ENCODE measurements at regions of chr7 and their contacts with region 1.

Region 1: GRCh38 chr7:85023045-85023712 is 163.7 kb downstream of the SEMA3D start:
- DNase-seq: peak in 1 of 2 donors; percentile 46
- ATAC-seq: peak in 1 of 8 donors; percentile 43
- H3K4me3 ChIP-seq: no peak overlapping the region
- H3K27ac ChIP-seq: no peak overlapping the region
- H3K4me1 ChIP-seq: peaks cover 0 to 9% (median 0%) of the 10 kb centered on the region in 9 donors
- H3K27me3 ChIP-seq: no peaks in the 10 kb centered on the region
- CTCF ChIP-seq: peak; percentile 55 to 87 (median 69)

Region 2: DNA sequence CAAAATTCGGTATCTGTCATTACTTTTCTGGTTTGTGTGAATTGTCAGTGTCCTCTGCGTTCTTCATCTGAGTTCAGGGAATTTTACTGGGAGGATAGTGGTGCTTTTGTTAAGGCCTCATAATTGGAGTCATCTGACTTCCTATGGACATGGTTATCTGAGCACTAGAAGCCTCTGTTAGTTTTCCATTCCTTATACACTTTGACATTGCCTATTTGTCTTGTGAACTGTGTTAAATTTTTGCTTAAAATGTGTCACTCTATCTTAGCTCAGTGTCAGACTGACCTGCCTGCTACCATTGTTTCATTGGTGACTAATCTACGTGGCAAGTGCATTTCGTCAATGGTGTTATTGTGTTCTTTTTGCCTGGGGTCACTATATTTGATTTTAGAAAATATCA is 1081.9 kb before region 1 on chr7:
- intact Hi-C with region 1: loop called in 9 of 10 experiments (anchors 1 to 10 kb)
- DNase-seq: no peak
- ATAC-seq: no peak
- H3K4me3 ChIP-seq: no peak overlapping the region
- H3K27ac ChIP-seq: no peak overlapping the region
- H3K4me1 ChIP-seq: peaks cover 0 to 4% (median under 1%) of the 10 kb centered on the region in 9 donors
- H3K27me3 ChIP-seq: no peaks in the 10 kb centered on the region
- CTCF ChIP-seq: no peak

Region 3: GRCh38 chr7:84194543-84195271 is 828.5 kb before region 1 on chr7 and contains the start of gene SEMA3A:
- intact Hi-C with region 1: loop called in 3 of 10 experiments (anchors 5 to 10 kb)
- DNase-seq: peak in 1 of 2 donors; percentile 16
- ATAC-seq: peak; percentile 73 to 85 (median 78)
- H3K4me3 ChIP-seq: peak within 1 kb of the TSS in 9 of 10 donors; percentile 29 to 57 (median 48)
- H3K27ac ChIP-seq: peak within 1 kb of the TSS in 1 of 10 donors; percentile 35
- H3K4me1 ChIP-seq: peaks cover 0 to 13% (median 0%) of the 10 kb centered on the region in 9 donors
- H3K27me3 ChIP-seq: no peaks in the 10 kb centered on the region
- CTCF ChIP-seq: no peak
- total RNA-seq, gene SEMA3A: 0.57 to 5.3 (median 1.7) TPM

Region 4: GRCh38 chr7:84914598-84914997 is 108.6 kb before region 1 on chr7:
- intact Hi-C with region 1: loop called in 4 of 10 experiments (anchors 1 to 10 kb)
- DNase-seq: no peak
- ATAC-seq: peak in 1 of 8 donors; percentile 41
- H3K4me3 ChIP-seq: no peak overlapping the region
- H3K27ac ChIP-seq: no peak overlapping the region
- H3K4me1 ChIP-seq: no peaks in the 10 kb centered on the region
- H3K27me3 ChIP-seq: no peaks in the 10 kb centered on the region
- CTCF ChIP-seq: peak in 3 of 9 donors; percentile 4 to 16 (median 6)

Measured in heart right ventricle (tissue), 16 donors.